ENCODE measurements at regions of chr11 and their contacts with region 1.

Region 1: GRCh38 chr11:113189909-113190667 is 124.3 kb upstream of the TTC12 start:
- DNase-seq: no peak
- CTCF ChIP-seq: no peak

Region 2: DNA sequence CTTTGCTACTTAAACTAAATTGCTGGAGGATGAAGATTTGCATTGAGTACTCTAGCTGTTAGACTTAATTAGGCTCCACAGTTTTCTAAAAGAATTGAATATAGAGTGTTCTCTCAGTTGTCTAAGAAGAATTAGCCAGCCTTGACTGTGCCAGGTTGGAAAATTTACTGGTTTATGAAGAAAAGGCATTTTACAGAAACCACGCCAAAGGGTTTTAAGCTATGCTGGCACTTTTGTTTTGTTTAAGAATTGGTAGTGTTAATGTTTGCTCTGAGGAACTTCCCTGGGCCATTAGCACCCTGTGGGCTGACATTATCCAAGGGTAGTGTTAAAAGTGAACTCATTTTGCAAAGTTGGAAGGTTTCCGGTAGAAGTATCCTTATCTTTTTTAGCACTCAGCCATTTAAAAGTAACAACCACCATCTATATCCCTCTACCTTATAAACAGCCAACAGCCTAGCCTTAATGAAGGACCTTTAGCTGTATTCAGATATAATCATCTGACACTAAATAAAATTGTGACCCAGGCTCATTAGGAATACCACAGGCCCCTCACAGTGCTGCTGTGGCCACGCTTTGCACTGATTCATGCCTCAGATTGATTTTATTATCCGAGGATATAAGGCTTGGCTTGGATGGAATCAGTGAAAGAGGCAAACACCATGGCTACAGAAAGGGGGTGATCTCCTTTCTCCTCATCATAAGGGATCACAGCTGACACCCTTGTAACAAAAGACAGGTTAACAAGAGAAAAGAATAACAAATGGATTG is 69.9 kb before region 1 on chr11:
- in situ Hi-C with region 1: loop called (anchors 10 kb)
- DNase-seq: no peak
- CTCF ChIP-seq: no peak